ENCODE measurements at regions of chr4 and their contacts with region 1.

Region 1: GRCh38 chr4:174016251-174016650 is 267.2 kb downstream of the FBXO8 start:
- DNase-seq: no peak
- H3K4me3 Mint-ChIP-seq: no peak overlapping the region
- H3K27ac Mint-ChIP-seq: no peak overlapping the region
- H3K4me1 Mint-ChIP-seq: no peaks in the 10 kb centered on the region
- H3K27me3 Mint-ChIP-seq: no peaks in the 10 kb centered on the region

Region 2: GRCh38 chr4:174056959-174057358 is 40.7 kb after region 1 on chr4:
- CTCF ChIA-PET with region 1: no interaction called
- POLR2A ChIA-PET with region 1: no interaction called
- intact Hi-C with region 1: no loop called
- DNase-seq: no peak
- H3K4me3 Mint-ChIP-seq: no peak overlapping the region
- H3K27ac Mint-ChIP-seq: no peak overlapping the region
- H3K4me1 Mint-ChIP-seq: no peaks in the 10 kb centered on the region
- H3K27me3 Mint-ChIP-seq: no peaks in the 10 kb centered on the region

Region 3: DNA sequence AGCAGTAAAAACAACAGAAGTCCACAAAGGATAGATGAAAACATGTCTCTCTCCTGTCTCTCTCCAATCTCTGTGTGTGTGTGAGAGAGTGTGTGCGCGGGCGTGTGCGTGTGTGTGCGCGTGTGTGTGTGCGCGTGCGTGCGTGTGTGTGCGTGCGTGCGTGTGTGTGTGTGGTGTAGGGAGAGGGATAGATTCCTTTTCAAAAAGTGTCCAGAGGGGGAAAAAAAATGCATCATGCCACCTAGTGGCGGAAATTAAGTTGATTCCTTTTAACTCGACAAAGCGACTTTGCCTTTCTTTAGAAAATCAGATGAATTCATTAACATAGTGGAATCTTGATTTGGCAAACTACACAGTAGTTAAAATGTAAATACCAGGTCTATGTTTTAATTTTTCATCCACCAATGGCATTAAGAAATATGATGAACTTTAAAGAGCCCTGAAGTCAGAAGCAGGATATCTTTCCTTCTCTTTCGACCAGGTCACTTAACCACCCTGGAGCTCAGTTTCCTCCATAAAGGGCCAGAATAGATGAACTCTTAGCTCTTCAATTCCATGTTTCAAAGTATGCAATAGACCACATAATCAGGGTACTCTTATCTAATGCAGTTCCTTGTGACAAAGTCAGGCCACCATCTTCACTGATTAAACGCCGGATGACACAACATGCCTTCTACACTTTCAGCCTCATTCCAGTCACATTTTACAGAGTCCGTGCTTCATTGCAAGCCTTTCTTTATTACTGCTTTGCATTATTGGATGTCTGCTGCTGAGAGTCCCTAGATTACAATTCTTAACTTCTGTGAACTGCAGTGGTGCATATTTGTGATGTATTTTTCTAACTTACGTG is 104.4 kb after region 1 on chr4:
- CTCF ChIA-PET with region 1: no interaction called
- POLR2A ChIA-PET with region 1: no interaction called
- intact Hi-C with region 1: loop called (anchors 5 kb)
- DNase-seq: peak; percentile 16
- H3K4me3 Mint-ChIP-seq: no peak overlapping the region
- H3K27ac Mint-ChIP-seq: no peak overlapping the region
- H3K4me1 Mint-ChIP-seq: no peaks in the 10 kb centered on the region
- H3K27me3 Mint-ChIP-seq: peaks cover 17% of the 10 kb centered on the region